ENCODE measurements at regions of chr10 and their contacts with region 1.

Region 1: GRCh38 chr10:62804356-62805230 is at the start of gene ADO:
- DNase-seq: peak; percentile 80
- H3K4me3 ChIP-seq: peak within 1 kb of the TSS; percentile 95
- H3K27ac ChIP-seq: peak within 1 kb of the TSS; percentile 88
- H3K4me1 ChIP-seq: peaks cover 13% of the 10 kb centered on the region
- H3K27me3 ChIP-seq: no peaks in the 10 kb centered on the region
- CTCF ChIP-seq: no peak
- total RNA-seq, gene ADO: 13.5 to 15.5 TPM

Region 2: GRCh38 chr10:62610649-62611229 is 193.9 kb before region 1 on chr10:
- intact Hi-C with region 1: loop called (anchors 5 kb)
- DNase-seq: peak; percentile 41
- H3K4me3 ChIP-seq: no peak overlapping the region
- H3K27ac ChIP-seq: no peak overlapping the region
- H3K4me1 ChIP-seq: no peaks in the 10 kb centered on the region
- H3K27me3 ChIP-seq: no peaks in the 10 kb centered on the region
- CTCF ChIP-seq: peak; percentile 54

Region 3: GRCh38 chr10:62666275-62666674 is 138.3 kb before region 1 on chr10:
- intact Hi-C with region 1: no loop called
- DNase-seq: no peak
- H3K4me3 ChIP-seq: no peak overlapping the region
- H3K27ac ChIP-seq: no peak overlapping the region
- H3K4me1 ChIP-seq: no peaks in the 10 kb centered on the region
- H3K27me3 ChIP-seq: no peaks in the 10 kb centered on the region
- CTCF ChIP-seq: no peak